ENCODE measurements at regions of chr17 and their contacts with region 1.

Region 1: DNA sequence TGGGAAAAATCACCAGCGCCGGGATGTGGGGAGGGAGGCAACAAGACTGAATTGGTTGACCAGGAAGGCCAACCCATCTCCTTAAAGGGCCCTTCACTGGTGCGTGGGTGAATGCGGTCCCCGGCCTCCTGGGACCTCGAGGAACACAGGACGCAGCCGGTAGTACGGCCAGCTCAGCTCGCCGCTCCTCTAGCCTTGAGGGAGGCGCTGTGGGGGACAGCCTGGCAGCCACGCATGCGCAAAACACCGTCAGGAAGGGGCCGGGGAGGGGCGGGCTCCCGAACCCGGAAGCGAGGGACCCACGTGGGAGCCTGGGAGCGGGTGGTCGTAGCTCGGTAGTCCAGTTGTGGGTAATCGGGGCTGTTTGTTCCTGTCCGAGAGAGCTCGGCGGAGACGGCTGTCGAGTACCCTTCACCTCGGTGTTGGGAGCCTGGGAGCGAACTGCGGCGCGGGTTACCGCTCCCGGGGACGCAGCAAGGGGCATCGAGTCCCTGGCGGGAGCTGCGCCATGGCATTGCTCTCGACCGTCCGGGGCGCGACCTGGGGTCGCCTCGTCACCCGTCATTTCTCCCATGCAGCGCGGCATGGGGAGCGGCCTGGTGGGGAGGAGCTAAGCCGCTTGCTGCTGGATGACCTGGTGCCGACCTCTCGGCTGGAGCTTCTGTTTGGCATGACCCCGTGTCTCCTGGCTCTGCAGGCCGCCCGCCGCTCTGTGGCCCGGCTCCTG is at the start of gene MRM1:
- DNase-seq: peak; percentile 72 to 89 (median 80)
- ATAC-seq: peak; percentile 90
- H3K4me3 ChIP-seq: peak within 1 kb of the TSS; percentile 95
- H3K4me3 Mint-ChIP-seq: peak within 1 kb of the TSS; percentile 92 to 97 (median 94)
- H3K27ac ChIP-seq: peak within 1 kb of the TSS; percentile 79
- H3K27ac Mint-ChIP-seq: peak within 1 kb of the TSS; percentile 91 to 96 (median 94)
- H3K4me1 ChIP-seq: peaks cover 11 to 19% of the 10 kb centered on the region in 2 donors
- H3K4me1 Mint-ChIP-seq: peaks cover 23 to 49% (median 41%) of the 10 kb centered on the region in 7 donors
- H3K27me3 ChIP-seq: no peaks in the 10 kb centered on the region
- H3K27me3 Mint-ChIP-seq: no peaks in the 10 kb centered on the region
- total RNA-seq, gene MRM1: 3.8 to 15.6 (median 13.3) TPM

Region 2: GRCh38 chr17:36534840-36535668 is 66.4 kb before region 1 on chr17 and contains the starts of genes MYO19 and PIGW:
- CTCF ChIA-PET with region 1: interaction called, 5 read pairs
- POLR2A ChIA-PET with region 1: interaction called, 22 read pairs
- intact Hi-C with region 1: loop called in 1 of 2 experiments (anchors 2 kb)
- DNase-seq: peak; percentile 74 to 90 (median 81)
- ATAC-seq: peak; percentile 88
- H3K4me3 ChIP-seq: peak within 1 kb of the TSS; percentile 100
- H3K4me3 Mint-ChIP-seq: peak within 1 kb of the TSS; percentile 93 to 100 (median 98)
- H3K27ac ChIP-seq: peak within 1 kb of the TSS; percentile 97
- H3K27ac Mint-ChIP-seq: peak within 1 kb of the TSS; percentile 94 to 99 (median 97)
- H3K4me1 ChIP-seq: peaks cover 6% of the 10 kb centered on the region in 2 donors
- H3K4me1 Mint-ChIP-seq: peaks cover 5 to 38% (median 12%) of the 10 kb centered on the region in 7 donors
- H3K27me3 ChIP-seq: no peaks in the 10 kb centered on the region
- H3K27me3 Mint-ChIP-seq: no peaks in the 10 kb centered on the region
- total RNA-seq, gene MYO19: 65.2 to 114 (median 76.9) TPM
- total RNA-seq, gene PIGW: 4.2 to 15.6 (median 5.4) TPM

Region 3: DNA sequence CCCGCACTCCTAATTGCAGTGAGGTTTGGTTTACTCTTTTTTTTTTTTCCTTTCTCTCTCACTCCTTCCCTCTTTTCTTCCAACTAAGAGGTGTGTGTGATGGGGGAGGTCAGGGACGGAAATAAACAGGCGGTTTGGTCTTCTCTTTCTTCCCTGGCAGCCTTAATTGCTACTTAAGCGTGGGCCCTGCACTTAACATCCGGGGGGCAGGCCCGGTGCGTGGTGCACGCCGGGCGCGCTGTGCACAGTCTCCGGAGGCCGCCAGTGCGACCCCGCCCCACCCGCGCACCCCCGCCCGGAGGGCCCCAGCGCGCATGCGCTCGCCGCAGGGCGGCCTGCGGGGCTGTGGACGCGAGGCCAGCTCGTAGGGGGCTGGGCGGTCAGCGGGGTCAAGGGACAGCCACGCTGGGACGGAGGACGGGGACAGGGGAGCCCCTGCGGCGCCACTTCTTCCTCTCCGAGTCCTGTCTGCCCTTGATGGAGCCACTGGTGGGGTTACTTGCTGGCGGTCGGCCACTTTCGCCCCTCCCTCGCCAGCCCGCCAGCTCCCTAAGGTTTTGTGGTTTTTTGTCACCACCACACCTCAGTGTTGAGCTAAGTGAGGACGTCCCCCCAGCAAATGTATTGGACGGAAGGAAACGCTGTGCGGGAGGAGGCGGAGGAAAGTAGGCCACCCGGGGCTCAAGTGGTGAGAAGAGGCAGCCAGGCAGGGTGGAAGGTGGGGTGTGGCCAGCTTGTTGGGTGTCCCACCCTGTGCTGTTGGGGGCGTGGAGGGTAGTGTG is 120.8 kb after region 1 on chr17:
- CTCF ChIA-PET with region 1: no interaction called
- POLR2A ChIA-PET with region 1: interaction called, 10 read pairs
- intact Hi-C with region 1: loop called in 1 of 2 experiments (anchors 2 kb)
- DNase-seq: peak; percentile 68 to 91 (median 84)
- ATAC-seq: peak; percentile 97
- H3K4me3 ChIP-seq: peak overlapping the region; percentile 72
- H3K4me3 Mint-ChIP-seq: peak overlapping the region; percentile 67 to 90 (median 86)
- H3K27ac ChIP-seq: peak overlapping the region; percentile 80
- H3K27ac Mint-ChIP-seq: peak overlapping the region; percentile 90 to 99 (median 98)
- H3K4me1 ChIP-seq: peaks cover 21 to 49% of the 10 kb centered on the region in 2 donors
- H3K4me1 Mint-ChIP-seq: peaks cover 32 to 64% (median 58%) of the 10 kb centered on the region in 7 donors
- H3K27me3 ChIP-seq: no peaks in the 10 kb centered on the region
- H3K27me3 Mint-ChIP-seq: no peaks in the 10 kb centered on the region

Region 4: GRCh38 chr17:37239690-37240334 is 638.3 kb after region 1 on chr17:
- CTCF ChIA-PET with region 1: interaction called, 10 read pairs
- POLR2A ChIA-PET with region 1: no interaction called
- intact Hi-C with region 1: loop called (anchors 1 to 2 kb)
- DNase-seq: peak in 4 of 9 donors; percentile 2 to 11 (median 6)
- ATAC-seq: no peak
- H3K4me3 ChIP-seq: no peak overlapping the region
- H3K4me3 Mint-ChIP-seq: no peak overlapping the region
- H3K27ac ChIP-seq: no peak overlapping the region
- H3K27ac Mint-ChIP-seq: peak overlapping the region in 1 of 9 donors; percentile 69
- H3K4me1 ChIP-seq: no peaks in the 10 kb centered on the region
- H3K4me1 Mint-ChIP-seq: peaks cover 0 to 4% (median 0%) of the 10 kb centered on the region in 7 donors
- H3K27me3 ChIP-seq: no peaks in the 10 kb centered on the region
- H3K27me3 Mint-ChIP-seq: no peaks in the 10 kb centered on the region

Region 5: GRCh38 chr17:37392024-37392590 is 790.6 kb after region 1 on chr17:
- CTCF ChIA-PET with region 1: no interaction called
- POLR2A ChIA-PET with region 1: no interaction called
- intact Hi-C with region 1: loop called in 1 of 2 experiments (anchors 1 kb)
- DNase-seq: no peak
- ATAC-seq: no peak
- H3K4me3 ChIP-seq: no peak overlapping the region
- H3K4me3 Mint-ChIP-seq: peak overlapping the region in 2 of 10 donors; percentile 25 to 27
- H3K27ac ChIP-seq: no peak overlapping the region
- H3K27ac Mint-ChIP-seq: peak overlapping the region in 3 of 9 donors; percentile 15 to 52 (median 47)
- H3K4me1 ChIP-seq: peaks cover 0 to 6% of the 10 kb centered on the region in 2 donors
- H3K4me1 Mint-ChIP-seq: peaks cover 0 to 21% (median 13%) of the 10 kb centered on the region in 7 donors
- H3K27me3 ChIP-seq: no peaks in the 10 kb centered on the region
- H3K27me3 Mint-ChIP-seq: no peaks in the 10 kb centered on the region

Measured in naive thymus-derived CD4-positive, alpha-beta T cell (primary cell).